WTC11 (cell line): ENCODE measurements at regions of chr7 and their contacts with region 1.

Region 1: GRCh38 chr7:44999245-45000095 is 531 bp upstream of the CCM2 start:
- DNase-seq: peak; percentile 99
- ATAC-seq: peak; percentile 94
- H3K4me3 Mint-ChIP-seq: peak overlapping the region; percentile 93
- H3K27ac Mint-ChIP-seq: peak overlapping the region; percentile 100
- H3K4me1 Mint-ChIP-seq: peaks cover 13% of the 10 kb centered on the region
- H3K27me3 Mint-ChIP-seq: no peaks in the 10 kb centered on the region
- CTCF ChIP-seq: no peak

Region 2: GRCh38 chr7:44398511-44398911 is 601.0 kb before region 1 on chr7:
- CTCF ChIA-PET with region 1: no interaction called
- POLR2A ChIA-PET with region 1: no interaction called
- DNase-seq: no peak
- ATAC-seq: no peak
- H3K4me3 Mint-ChIP-seq: no peak overlapping the region
- H3K27ac Mint-ChIP-seq: no peak overlapping the region
- H3K4me1 Mint-ChIP-seq: no peaks in the 10 kb centered on the region
- H3K27me3 Mint-ChIP-seq: no peaks in the 10 kb centered on the region
- CTCF ChIP-seq: no peak

Region 3: DNA sequence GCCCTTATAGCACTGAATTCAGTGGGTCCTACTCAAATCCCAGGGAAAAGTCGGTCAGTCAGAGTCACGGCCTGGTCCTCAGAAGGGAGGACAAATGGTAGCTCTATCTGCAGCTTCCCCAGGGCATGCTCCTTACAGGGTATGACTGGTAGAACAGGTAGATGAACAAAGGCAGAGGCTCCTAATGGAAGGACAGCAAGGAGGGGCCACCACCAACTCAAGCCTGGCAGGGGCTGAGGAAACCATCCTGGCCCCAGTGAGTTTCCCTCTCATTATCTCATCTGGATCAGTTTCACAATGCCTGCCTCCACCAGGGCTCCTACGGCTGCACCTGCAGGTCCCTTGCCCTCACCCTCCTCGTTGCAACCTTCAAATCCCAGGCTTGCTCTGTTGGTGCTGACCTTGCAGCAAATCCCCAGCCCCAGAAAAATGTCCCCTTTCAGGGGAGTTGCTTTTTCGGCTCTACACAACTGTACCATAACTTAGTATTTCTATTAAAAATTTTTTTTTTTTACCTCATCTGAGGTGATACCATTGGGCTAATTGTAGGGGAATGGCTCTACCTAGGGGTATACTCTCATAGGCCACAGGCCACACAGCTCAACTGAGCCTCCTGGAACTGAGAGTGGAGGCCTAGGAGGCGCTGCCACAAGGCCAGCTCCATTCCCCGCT is 18.3 kb before region 1 on chr7:
- CTCF ChIA-PET with region 1: interaction called, 10 read pairs
- POLR2A ChIA-PET with region 1: interaction called, 6 read pairs
- DNase-seq: no peak
- ATAC-seq: peak; percentile 33
- H3K4me3 Mint-ChIP-seq: no peak overlapping the region
- H3K27ac Mint-ChIP-seq: no peak overlapping the region
- H3K4me1 Mint-ChIP-seq: peaks cover 20% of the 10 kb centered on the region
- H3K27me3 Mint-ChIP-seq: no peaks in the 10 kb centered on the region; the same call in 1 of the 2 replicates
- CTCF ChIP-seq: no peak

Region 4: DNA sequence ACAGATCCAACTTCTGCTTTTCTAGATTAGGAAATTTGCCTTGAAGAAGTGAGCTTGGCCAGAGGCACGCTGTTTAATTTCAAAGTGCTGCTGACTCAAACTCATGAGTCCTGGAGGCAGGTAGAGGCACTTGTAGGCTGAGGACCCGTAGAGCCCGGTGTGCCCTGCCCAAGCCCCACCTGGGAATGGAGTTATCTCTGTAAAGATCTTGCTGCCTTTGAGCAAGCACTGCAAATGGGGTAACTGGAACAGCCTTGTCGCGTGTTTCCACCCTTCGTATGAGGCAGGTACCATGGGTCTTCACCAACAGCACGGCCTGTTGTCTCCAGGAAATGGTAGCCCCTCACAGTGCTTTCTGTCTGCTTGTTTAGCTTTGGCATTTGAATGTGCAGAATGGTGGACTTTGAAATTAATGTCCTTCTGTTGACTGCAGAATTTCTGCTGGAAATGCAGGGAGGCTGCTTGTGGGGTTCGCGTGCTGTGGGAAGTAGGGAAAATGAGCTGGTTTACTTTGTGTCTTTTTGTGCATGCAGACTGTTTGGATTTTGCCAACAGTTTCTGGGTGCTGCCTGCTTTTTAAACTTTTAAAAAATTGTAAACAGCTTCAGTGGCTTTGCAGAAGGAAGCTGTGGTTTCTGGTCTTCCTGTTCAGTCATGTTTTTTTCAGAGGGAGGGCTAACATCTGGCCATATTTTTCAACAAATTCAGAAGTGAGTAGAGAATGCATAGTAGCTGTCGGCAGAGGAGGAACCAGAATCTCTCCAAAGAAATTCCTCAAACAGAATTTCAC is 27.7 kb after region 1 on chr7:
- CTCF ChIA-PET with region 1: no interaction called
- POLR2A ChIA-PET with region 1: no interaction called
- DNase-seq: no peak
- ATAC-seq: no peak
- H3K4me3 Mint-ChIP-seq: no peak overlapping the region
- H3K27ac Mint-ChIP-seq: peak overlapping the region; percentile 63
- H3K4me1 Mint-ChIP-seq: peaks cover 4% of the 10 kb centered on the region
- H3K27me3 Mint-ChIP-seq: no peaks in the 10 kb centered on the region
- CTCF ChIP-seq: no peak

Region 5: GRCh38 chr7:45039131-45039530 is 39.7 kb after region 1 on chr7:
- CTCF ChIA-PET with region 1: no interaction called
- POLR2A ChIA-PET with region 1: no interaction called
- DNase-seq: no peak
- ATAC-seq: no peak
- H3K4me3 Mint-ChIP-seq: no peak overlapping the region
- H3K27ac Mint-ChIP-seq: no peak overlapping the region
- H3K4me1 Mint-ChIP-seq: peaks cover 17% of the 10 kb centered on the region
- H3K27me3 Mint-ChIP-seq: no peaks in the 10 kb centered on the region
- CTCF ChIP-seq: no peak

Region 6: DNA sequence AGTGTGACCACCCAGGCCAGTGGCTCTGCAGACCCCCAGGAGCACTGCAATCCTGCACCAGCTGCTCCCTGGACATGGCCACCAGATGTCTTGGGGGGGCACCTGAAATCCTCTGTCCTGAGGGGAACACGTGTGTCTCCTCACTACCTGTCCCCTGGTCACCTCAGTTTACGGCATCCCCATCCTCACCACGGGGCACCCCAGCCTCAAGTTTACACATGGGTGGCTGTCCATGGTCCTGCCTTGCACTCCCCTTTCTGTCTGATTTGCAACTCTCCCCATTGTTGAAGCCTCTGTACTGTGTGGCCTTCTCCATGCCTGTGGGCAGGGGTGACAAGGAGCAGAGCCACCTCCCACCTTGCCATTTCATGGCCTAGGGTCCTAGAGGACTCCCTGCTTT is 225.4 kb after region 1 on chr7:
- CTCF ChIA-PET with region 1: no interaction called
- POLR2A ChIA-PET with region 1: no interaction called
- DNase-seq: peak; percentile 56
- ATAC-seq: peak; percentile 61
- H3K4me3 Mint-ChIP-seq: no peak overlapping the region
- H3K27ac Mint-ChIP-seq: no peak overlapping the region
- H3K4me1 Mint-ChIP-seq: peaks cover 13% of the 10 kb centered on the region
- H3K27me3 Mint-ChIP-seq: no peaks in the 10 kb centered on the region; the same call in 1 of the 2 replicates
- CTCF ChIP-seq: no peak